Naive thymus-derived CD4-positive, alpha-beta T cell (primary cell): ENCODE measurements at regions of chr1 and their contacts with region 1.

Region 1: DNA sequence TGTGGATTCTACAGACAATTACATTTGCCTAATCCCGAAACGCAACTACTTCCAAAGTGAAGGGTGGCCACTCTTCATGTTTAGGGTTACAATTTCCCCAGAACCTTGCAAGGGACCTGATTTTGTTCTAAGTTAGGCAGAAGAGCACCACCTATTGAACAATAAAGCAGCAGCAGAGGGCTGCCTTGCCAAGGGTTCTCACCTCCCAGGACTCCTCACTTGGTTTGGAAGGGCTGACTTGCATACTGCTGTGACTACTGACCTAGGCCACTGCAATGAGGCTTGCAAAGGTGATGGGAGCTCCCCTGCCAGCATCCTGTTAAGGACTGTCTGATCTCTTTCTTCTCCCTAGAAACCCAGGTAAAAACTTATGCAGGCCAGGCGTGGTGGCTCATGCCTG is 14.2 kb downstream of the MTOR start:
- DNase-seq: no peak
- ATAC-seq: no peak
- H3K4me3 ChIP-seq: no peak overlapping the region
- H3K4me3 Mint-ChIP-seq: no peak overlapping the region
- H3K27ac ChIP-seq: no peak overlapping the region
- H3K27ac Mint-ChIP-seq: peak overlapping the region in 1 of 9 donors; percentile 12
- H3K4me1 ChIP-seq: peaks cover 0 to 7% of the 10 kb centered on the region in 2 donors
- H3K4me1 Mint-ChIP-seq: peaks cover 0 to 20% (median 4%) of the 10 kb centered on the region in 7 donors
- H3K27me3 ChIP-seq: no peaks in the 10 kb centered on the region
- H3K27me3 Mint-ChIP-seq: no peaks in the 10 kb centered on the region

Region 2: GRCh38 chr1:11295905-11296304 is 47.8 kb after region 1 on chr1:
- CTCF ChIA-PET with region 1: interaction called, 37 read pairs
- POLR2A ChIA-PET with region 1: no interaction called
- intact Hi-C with region 1: no loop called
- DNase-seq: peak in 5 of 9 donors; percentile 31 to 55 (median 44)
- ATAC-seq: no peak
- H3K4me3 ChIP-seq: no peak overlapping the region
- H3K4me3 Mint-ChIP-seq: peak overlapping the region in 2 of 10 donors; percentile 18 to 59
- H3K27ac ChIP-seq: peak overlapping the region; percentile 41
- H3K27ac Mint-ChIP-seq: peak overlapping the region in 8 of 9 donors; percentile 55 to 93 (median 85)
- H3K4me1 ChIP-seq: peaks cover 0 to 34% of the 10 kb centered on the region in 2 donors
- H3K4me1 Mint-ChIP-seq: peaks cover 37 to 72% (median 59%) of the 10 kb centered on the region in 7 donors
- H3K27me3 ChIP-seq: no peaks in the 10 kb centered on the region
- H3K27me3 Mint-ChIP-seq: no peaks in the 10 kb centered on the region

Region 3: GRCh38 chr1:11320153-11320936 is 72.2 kb after region 1 on chr1:
- CTCF ChIA-PET with region 1: interaction called, 3 read pairs
- POLR2A ChIA-PET with region 1: no interaction called
- intact Hi-C with region 1: loop called in 1 of 2 experiments (anchors 2 kb)
- DNase-seq: peak in 5 of 9 donors; percentile 10 to 45 (median 24)
- ATAC-seq: no peak
- H3K4me3 ChIP-seq: no peak overlapping the region
- H3K4me3 Mint-ChIP-seq: peak overlapping the region in 3 of 10 donors; percentile 14 to 54 (median 48)
- H3K27ac ChIP-seq: no peak overlapping the region
- H3K27ac Mint-ChIP-seq: no peak overlapping the region
- H3K4me1 ChIP-seq: peaks cover 0 to 5% of the 10 kb centered on the region in 2 donors
- H3K4me1 Mint-ChIP-seq: peaks cover 2 to 8% (median 6%) of the 10 kb centered on the region in 7 donors
- H3K27me3 ChIP-seq: no peaks in the 10 kb centered on the region
- H3K27me3 Mint-ChIP-seq: peaks cover 0 to 7% (median 2%) of the 10 kb centered on the region in 5 donors